Caco-2 (cell line): ENCODE measurements at regions of chr19 and their contacts with region 1.

Region 1: DNA sequence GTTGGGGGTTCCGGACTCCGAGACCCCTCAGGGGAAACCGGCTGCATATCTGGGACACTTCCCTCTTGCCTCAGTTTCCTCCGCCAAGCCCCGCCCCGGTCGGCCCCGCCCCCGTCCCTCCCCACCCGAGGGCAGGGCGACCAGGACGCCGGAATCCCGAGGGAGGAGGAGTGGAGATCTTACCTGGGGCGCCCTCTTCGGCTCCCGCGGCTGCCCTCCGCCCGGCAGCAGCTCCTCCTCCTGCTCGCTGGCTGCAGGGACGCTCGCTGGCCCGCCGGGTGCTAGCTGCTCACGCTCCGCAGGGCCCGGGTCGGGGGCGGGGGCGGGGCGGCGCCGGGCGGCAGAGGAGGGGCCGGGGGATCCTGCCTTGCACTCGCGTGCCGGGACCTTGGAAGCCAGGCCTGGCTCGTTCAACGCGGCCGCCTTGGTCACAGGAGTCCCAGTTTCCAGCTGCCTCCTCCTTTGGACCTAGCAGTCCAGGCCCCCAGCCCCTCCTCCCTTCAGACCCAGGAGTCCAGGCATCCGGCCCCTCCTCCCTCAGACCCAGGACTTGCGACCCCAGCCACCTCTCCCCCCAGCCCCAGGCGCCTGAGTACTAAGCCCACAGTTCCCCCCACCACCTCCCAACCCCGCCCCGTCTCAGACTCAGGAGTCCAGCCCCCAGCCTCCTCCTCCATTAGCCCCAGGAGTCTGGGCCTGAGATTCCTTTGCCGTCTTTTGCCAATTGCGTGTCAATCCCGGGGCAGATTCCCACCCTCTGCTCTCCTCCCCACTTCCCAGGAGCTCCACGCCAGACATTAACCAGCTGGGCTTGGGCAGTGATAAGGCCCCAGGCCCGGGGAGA is at the start of gene NTF4:
- DNase-seq: peak; percentile 92
- H3K4me3 ChIP-seq: peak within 1 kb of the TSS; percentile 38
- H3K4me3 Mint-ChIP-seq: peak within 1 kb of the TSS; percentile 71
- H3K27ac Mint-ChIP-seq: peak within 1 kb of the TSS; percentile 73
- H3K4me1 ChIP-seq: peaks cover 34% of the 10 kb centered on the region
- H3K4me1 Mint-ChIP-seq: peaks cover 26% of the 10 kb centered on the region
- H3K27me3 ChIP-seq: no peaks in the 10 kb centered on the region
- H3K27me3 Mint-ChIP-seq: no peaks in the 10 kb centered on the region
- CTCF ChIP-seq: peak in 1 of 2 experiments; percentile 29
- total RNA-seq, gene NTF4: 9.1 and 10.2 TPM in 2 replicates

Region 2: DNA sequence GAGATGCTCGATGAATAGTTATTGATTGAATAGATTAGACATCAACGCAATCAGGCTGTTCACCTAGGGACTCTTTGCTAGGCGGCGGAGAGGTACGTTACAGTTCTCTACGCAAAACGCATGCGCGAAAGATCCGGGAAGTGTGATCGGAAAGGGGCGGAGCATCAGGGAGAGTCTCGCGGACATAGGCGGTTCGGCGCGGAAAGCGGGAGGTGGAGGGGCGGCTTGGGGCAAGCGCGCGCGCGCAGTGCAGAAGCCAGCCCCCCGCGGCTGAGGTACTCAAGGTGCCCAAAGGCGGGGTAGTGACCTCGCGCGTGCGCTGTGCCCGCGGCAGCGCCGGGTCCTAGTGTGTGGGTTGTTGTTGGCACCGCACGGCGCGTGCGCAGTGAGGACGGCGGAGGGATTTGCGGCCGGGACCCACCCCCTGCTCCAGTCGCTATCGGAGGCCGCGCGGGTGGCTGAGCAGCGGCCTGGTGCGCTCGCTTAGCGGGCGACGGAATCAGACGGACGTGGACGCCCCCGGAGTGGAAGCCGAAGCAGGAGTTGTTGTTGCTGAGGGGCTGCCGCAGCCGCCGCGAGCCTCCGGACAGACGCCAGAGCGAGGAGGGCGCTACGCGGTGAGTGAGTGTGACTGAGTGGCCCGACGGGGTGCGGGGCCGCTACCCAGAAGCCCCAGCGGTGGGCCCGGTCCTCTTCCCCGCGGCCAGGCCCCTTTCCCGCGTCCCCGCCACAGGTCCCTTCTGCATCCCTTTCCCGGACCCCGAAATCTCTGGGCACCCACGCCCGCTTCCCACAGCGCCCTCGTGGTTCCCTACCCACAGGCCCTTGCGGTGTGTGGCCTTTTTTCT is 20.3 kb after region 1 on chr19 and contains the start of gene SNRNP70:
- CTCF ChIA-PET with region 1: no interaction called
- POLR2A ChIA-PET with region 1: no interaction called
- intact Hi-C with region 1: loop called (anchors 2 kb)
- DNase-seq: peak; percentile 100
- H3K4me3 ChIP-seq: peak within 1 kb of the TSS; percentile 71
- H3K4me3 Mint-ChIP-seq: peak within 1 kb of the TSS; percentile 92
- H3K27ac Mint-ChIP-seq: peak within 1 kb of the TSS; percentile 78
- H3K4me1 ChIP-seq: 0 out of 2 replicates have a peak, but pooled peaks cover 7% of the 10 kb centered on the region
- H3K4me1 Mint-ChIP-seq: peaks cover 17% of the 10 kb centered on the region
- H3K27me3 ChIP-seq: no peaks in the 10 kb centered on the region
- H3K27me3 Mint-ChIP-seq: no peaks in the 10 kb centered on the region
- CTCF ChIP-seq: no peak
- total RNA-seq, gene SNRNP70: 251 and 259 TPM in 2 replicates